Right lobe of liver (tissue), 6 donors: ENCODE measurements at regions of chr19 and their contacts with region 1.

Region 1: DNA sequence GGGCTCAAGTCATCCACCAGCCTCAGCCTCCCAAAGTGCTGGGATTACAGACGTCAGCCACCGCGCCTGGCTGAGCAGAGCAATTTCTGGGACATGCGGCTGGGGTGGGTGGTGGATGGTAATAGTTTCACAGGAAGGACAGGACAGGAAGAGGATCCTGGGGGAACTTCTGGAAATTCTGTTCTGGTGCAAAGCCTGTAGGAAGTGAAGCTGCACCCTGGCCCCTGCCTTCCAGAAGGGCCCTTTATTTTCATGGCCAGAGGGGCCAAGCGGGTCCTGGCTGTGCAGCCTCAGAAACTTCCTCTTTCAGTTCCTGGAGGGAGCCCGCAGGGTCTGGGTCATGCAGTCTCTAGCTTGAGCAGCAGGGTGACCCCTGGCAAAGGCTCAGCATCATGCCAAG is 15.7 kb downstream of the FEM1A start:
- DNase-seq: peak; percentile 48 to 71 (median 51)
- ATAC-seq: peak; percentile 13 to 63 (median 34)
- H3K4me3 ChIP-seq: no peak overlapping the region
- H3K27ac ChIP-seq: no peak overlapping the region
- H3K4me1 ChIP-seq: no peaks in the 10 kb centered on the region
- H3K27me3 ChIP-seq: no peaks in the 10 kb centered on the region
- CTCF ChIP-seq: no peak
- POLR2A ChIP-seq: no peak

Region 2: DNA sequence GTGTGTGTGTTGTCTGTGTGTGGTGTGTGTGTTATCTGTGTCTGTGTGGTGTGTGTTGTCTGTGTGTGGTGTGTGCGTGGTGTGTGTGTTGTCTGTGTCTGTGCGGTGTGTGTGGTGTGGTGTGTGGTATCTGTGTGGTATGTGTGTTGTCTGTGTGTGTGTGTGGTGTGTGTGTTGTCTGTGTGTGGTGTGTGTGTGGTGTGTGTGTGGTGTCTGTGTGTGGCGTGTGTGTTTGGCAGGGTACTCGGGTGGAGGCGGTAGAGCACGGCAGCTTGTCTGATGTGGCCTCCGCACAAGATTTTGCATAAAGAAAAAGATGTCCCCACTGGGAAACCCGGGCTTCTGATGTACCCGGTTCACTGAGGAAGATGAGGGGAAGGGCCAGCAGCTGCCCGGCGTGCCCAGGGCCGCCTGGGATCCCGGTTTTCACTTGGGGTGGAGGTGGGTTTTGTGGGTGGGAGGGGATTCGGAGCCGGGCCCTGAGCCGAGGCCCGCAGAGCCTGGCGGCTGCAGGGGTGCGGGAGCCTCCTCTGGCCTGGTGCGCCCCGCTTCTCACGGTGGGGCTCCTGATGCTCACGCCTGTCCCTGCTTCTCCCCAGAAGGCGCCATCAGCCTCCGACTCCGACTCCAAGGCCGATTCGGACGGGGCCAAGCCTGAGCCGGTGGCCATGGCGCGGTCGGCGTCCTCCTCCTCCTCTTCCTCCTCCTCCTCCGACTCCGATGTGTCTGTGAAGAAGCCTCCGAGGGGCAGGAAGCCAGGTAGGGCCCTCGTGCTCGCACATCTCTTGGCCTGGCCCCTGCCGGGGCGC is 313.9 kb before region 1 on chr19:
- intact Hi-C with region 1: no loop called
- DNase-seq: no peak
- ATAC-seq: no peak
- H3K4me3 ChIP-seq: no peak overlapping the region
- H3K27ac ChIP-seq: no peak overlapping the region
- H3K4me1 ChIP-seq: no peaks in the 10 kb centered on the region
- H3K27me3 ChIP-seq: no peaks in the 10 kb centered on the region
- CTCF ChIP-seq: no peak
- POLR2A ChIP-seq: no peak

Region 3: DNA sequence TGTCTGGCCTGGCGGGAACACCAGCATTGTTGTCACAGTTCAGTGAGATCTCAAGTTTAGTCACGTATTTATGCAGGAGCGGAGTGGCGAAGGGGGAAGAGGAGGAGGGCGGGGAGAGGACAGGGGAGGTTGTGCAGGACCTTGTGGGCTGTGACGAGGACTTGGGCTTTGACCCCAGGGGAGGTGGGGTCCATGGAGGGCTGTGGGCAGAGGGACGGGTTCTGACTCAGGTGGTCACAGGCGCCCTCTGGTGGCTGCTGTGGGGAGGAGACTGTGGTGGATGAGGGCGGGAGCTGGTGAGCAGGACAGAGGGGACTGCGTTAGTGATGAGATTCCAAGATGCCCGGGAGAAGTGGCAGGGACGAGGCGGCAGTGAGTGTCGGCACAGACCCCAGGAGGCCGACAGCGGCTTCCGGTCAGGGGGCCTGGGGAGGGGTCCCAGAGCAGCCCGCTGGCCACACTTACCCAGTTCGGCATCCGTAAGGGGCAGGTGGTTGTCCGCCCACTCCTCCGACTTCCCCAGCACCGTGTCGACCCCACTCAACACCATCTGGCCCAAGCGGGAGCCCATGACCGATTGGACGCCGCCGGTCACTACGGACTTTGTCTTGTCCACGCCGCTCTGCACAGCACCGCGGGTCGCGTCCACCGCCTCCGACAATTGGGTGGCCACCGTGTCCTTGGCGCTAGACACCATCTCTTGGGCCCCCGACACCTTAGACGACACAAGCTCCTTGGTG is 44.5 kb after region 1 on chr19:
- intact Hi-C with region 1: loop called in 1 of 2 experiments (anchors 5 kb)
- DNase-seq: peak; percentile 64 to 77 (median 77)
- ATAC-seq: peak; percentile 83 to 89 (median 86)
- H3K4me3 ChIP-seq: no peak overlapping the region
- H3K27ac ChIP-seq: no peak overlapping the region
- H3K4me1 ChIP-seq: no peaks in the 10 kb centered on the region
- H3K27me3 ChIP-seq: no peaks in the 10 kb centered on the region
- CTCF ChIP-seq: peak; percentile 77 to 92 (median 86)
- POLR2A ChIP-seq: no peak

Region 4: DNA sequence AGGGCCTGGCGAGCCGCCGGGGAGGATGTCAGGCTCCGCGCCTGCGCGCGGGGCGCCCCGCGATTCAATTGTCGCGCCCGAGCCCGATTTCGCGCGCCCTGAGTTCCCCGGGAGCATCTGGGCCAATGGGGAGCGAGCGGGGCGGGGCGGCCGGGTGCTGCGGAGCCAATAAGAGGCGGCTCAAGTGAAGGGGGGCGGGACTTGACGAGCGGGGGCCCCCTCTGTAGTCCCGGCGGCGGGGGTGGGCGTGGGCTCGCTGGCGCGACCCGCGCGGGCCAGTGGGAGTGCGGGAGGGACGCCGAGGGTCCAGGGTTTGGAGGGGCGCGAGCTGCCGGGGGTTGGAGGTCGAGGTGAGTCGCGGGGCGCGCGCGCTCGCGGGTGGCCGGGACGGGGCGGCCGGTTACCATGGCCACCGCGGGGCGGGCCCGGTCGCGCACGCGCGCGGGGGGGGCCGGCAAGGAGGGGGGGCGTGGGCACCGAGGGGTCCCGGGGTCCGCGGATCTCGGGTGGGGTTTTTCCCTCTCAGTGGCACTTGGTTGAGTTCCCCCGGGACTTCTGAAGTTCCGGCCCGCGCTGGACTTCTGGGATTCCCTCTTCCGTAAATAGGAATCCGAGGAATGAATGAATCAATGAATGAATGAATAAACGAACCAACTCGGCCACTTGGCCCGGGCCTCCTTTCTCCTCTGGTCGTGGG is 102.9 kb after region 1 on chr19:
- intact Hi-C with region 1: loop called in 1 of 2 experiments (anchors 5 kb)
- DNase-seq: peak; percentile 89 to 93 (median 92)
- ATAC-seq: peak; percentile 91 to 96 (median 94)
- H3K4me3 ChIP-seq: peak overlapping the region; percentile 48 to 56 (median 51)
- H3K27ac ChIP-seq: no peak overlapping the region
- H3K4me1 ChIP-seq: peaks cover 0 to 13% (median 0%) of the 10 kb centered on the region in 4 donors
- H3K27me3 ChIP-seq: no peaks in the 10 kb centered on the region
- CTCF ChIP-seq: no peak
- POLR2A ChIP-seq: no peak